Activated CD8-positive, alpha-beta memory T cell treated with anti-CD3 and anti-CD28 coated beads, Interleukin-2, amount 10 ng/mL, durations not matched to agents 7 days and 5 days (primary cell): ENCODE measurements at regions of chr16 and their contacts with region 1.

Region 1: DNA sequence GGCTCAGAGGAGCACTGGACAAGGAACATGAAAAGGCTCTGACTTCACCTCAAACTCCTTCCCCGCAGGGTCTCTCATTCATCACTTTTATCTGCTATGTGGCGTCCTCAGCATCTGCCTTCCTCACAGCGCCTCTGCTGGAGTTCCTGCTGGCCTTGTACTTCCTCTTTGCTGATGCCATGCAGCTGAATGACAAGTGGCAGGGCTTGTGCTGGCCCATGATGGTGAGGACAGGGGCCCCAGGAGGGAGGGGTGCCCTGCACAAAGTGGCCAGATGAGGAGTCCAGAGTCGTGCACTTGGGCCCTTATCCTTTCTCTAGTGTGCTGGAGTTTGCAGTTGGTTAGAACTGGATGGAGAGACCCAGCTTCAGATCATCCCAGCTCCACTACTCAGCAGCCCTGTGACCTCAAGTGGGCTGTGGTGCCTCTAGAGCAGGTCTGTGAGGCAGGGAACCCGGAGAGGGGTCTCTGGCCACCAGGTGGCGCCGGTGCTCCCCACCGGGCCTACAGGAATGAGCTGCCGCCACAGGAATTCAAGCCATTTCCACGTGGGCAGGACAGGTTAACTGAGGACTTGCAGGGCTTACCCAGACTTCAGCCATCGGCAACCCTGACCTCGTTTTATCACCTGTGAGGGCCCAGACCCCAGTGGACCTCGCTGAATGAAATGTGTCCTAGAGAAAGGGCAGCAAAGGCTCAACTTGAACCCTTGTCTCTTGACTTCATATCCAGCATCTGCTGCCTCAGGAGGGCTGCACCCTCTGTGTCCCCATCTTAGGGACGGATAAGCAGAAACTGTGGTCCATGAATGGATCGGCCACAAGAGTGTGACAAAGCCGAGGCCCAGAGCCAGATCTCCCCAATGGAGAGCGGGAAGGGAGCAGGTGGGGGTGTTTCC is 4.0 kb downstream of the CMTM3 start:
- DNase-seq: peak; percentile 86
- ATAC-seq: peak; percentile 17
- H3K4me3 Mint-ChIP-seq: no peak overlapping the region
- H3K27ac Mint-ChIP-seq: peak overlapping the region; percentile 59
- H3K4me1 Mint-ChIP-seq: peaks cover 46% of the 10 kb centered on the region
- H3K27me3 Mint-ChIP-seq: no peaks in the 10 kb centered on the region

Region 2: DNA sequence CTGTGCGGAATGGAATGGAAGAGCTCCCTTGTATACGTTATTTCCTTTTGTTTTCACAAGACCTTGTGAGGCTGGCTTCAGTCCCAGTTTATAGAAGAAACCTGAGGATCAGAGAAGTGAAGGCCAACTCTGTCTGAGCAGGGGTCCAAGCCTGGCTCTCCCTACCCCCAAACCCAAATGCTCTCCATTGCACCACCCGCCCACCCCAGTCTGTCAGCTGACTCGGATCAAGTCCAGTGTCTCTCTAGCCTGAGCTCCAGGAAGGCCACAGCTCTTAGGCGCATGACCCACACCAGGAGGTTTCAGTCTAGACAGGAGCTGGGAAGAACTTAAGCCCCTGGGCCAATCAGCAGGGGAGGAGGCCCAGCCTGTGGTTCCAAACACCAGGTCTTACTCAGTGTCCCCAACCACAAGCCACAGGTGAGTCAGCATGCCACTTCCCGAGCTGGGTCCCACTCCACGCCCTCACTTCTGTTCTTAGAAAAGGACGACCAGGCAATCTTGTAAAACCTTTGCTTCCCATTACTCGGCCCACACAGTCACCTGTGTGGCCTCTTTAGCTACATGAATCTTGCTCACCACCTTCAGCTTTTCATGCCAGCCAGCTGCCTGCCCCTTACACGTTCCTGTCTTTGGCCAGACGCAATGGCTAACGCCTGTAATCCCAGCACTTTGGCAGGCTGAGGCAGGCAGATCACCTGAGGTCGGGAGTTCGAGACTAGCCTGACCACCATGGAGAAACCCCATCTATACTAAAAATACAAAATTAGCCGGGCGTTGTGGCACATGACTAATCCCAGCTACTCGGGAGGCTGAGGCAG is 86.3 kb before region 1 on chr16:
- CTCF ChIA-PET with region 1: interaction called, 14 read pairs
- DNase-seq: peak; percentile 98
- ATAC-seq: peak; percentile 84
- H3K4me3 Mint-ChIP-seq: peak overlapping the region; percentile 62
- H3K27ac Mint-ChIP-seq: peak overlapping the region; percentile 92
- H3K4me1 Mint-ChIP-seq: peaks cover 94% of the 10 kb centered on the region
- H3K27me3 Mint-ChIP-seq: no peaks in the 10 kb centered on the region

Region 3: DNA sequence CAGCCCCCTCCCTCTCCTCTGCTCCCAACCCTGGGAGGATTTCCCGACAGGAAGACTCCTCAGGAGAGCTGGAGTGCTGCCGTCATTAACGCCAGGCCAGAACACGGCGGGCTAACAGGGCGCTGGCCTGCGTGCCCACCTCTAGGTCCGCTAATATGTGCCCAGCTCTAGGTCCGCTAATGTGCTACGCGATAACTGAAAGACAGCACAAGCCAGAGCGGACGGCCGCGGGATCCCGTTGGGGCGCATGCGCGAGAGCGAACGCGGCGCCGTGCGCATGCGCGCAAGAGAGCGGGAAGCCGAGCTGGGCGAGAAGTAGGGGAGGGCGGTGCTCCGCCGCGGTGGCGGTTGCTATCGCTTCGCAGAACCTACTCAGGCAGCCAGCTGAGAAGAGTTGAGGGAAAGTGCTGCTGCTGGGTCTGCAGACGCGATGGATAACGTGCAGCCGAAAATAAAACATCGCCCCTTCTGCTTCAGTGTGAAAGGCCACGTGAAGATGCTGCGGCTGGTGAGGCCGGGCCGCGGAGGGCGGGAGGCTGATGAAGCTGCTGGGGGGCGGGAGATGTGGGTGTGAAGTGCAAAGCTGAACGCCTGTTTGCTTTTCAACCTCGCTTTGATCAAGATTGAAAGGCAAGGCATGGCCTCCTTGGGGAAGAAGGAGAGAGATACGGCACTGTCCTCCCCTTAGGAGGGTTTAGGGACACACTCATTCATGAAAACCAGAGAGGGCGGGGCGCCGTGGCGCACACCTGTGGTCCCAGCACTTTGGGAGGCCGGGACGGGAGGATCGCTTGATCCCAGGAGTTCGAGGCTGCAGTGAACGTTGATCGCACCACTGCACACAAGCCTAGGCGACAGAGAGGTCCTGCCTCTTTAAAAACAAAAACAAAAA is 56.0 kb before region 1 on chr16 and contains the start of gene CKLF:
- CTCF ChIA-PET with region 1: interaction called, 10 read pairs
- DNase-seq: peak; percentile 94
- ATAC-seq: peak; percentile 74
- H3K4me3 Mint-ChIP-seq: peak within 1 kb of the TSS; percentile 98
- H3K27ac Mint-ChIP-seq: peak within 1 kb of the TSS; percentile 96
- H3K4me1 Mint-ChIP-seq: peaks cover 80% of the 10 kb centered on the region
- H3K27me3 Mint-ChIP-seq: no peaks in the 10 kb centered on the region
- total RNA-seq, gene CKLF: 199 to 220 TPM

Region 4: DNA sequence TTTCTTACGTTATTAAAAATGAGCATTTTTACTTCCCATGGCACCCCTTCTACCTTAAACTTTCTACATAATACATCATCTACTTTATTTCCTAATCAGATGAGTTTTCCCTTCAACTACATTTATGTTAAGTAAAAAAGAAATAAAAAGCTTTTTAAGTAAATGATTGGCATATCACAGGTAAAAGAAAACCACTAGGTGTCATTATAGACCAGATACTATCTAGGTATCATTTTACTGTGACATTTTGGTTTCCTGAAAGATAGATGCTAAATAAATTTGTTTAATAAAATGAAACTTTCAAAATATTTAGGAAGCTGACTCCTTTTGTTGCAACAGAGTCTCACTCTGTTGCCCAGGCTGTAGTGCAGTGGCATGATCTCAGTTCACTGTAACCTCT is 46.1 kb before region 1 on chr16:
- CTCF ChIA-PET with region 1: interaction called, 16 read pairs
- DNase-seq: no peak
- ATAC-seq: no peak
- H3K4me3 Mint-ChIP-seq: no peak overlapping the region
- H3K27ac Mint-ChIP-seq: peak overlapping the region; percentile 75
- H3K4me1 Mint-ChIP-seq: peaks cover 71% of the 10 kb centered on the region
- H3K27me3 Mint-ChIP-seq: no peaks in the 10 kb centered on the region

Region 5: DNA sequence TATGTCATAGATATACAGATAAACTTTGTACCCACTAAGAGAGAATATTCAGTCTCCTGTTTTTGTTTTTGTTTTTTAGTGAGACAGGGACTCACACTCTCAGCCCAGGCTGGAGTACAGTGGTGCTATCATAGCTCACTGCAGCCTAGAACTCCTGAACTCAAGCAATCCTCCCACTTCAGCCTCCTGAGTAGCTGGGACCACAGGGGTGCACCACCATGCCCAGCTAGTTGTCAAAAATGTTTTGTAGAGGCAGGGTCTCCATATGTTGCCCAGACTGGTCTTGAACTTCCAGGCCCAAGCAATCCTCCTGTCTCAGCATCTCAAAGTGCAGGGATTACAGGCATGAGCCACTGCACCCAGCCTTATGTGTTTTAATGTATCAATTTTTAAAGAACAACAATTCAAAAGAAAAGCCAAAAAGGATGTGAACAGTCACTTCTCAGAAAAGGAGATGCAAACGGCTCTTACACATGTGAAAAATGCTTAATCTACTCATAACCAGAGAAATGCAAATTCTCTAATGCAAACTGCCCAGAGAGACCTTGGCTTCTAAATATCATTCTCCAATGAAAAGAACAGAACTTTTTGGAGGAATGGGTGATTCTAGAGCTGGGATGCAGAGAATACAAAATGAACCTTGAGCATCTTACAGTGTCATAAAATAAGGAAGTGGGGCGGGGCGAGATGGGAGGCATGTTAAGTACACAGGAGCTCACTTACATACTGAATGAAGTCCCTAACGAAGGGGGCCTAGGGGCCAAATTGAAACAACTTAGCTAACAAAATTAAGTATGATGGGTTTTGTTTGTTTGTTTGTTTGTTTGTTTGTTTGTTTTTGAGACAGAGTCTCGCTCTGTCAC is 11.3 kb before region 1 on chr16:
- CTCF ChIA-PET with region 1: interaction called, 36 read pairs
- DNase-seq: peak; percentile 57
- ATAC-seq: peak; percentile 72
- H3K4me3 Mint-ChIP-seq: peak overlapping the region; percentile 47
- H3K27ac Mint-ChIP-seq: peak overlapping the region; percentile 96
- H3K4me1 Mint-ChIP-seq: peaks cover 48% of the 10 kb centered on the region
- H3K27me3 Mint-ChIP-seq: no peaks in the 10 kb centered on the region

Region 6: DNA sequence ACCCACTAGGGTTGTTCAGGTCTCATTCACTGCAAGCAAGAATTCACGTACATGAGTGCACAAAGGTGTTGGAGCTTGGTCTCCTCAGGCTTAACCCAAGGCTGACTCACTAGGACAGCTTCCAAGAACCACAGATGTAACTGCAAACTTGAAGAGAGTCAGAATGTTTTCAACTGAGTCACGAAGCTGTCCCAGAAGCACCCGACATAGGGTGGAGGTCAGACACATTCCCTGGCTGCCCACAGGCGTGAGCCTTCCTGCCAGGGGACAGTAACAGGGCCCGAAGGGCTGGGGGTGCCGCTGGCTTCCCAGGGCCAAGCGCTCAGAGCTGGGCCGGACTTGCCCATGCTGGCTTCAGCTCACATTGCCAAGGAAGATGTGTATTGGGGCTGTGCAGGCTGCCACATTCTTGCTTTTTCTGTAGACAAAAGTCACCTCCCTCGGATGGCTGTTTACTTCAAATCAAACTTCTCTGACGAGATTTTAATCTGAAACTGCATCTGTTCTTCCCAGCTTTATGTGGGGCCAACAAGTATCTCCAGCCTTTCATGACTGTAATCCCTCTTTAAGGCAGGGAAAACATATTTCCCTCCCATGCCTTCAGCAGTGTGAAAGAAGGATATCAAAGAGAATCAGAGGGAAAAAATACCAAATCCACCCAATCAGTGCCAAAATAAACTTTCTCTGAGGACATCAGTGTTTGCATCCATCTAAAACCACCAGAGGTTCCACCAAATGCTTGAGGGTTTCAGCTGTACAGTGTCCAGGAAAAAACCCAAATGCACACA is 10.3 kb after region 1 on chr16:
- CTCF ChIA-PET with region 1: interaction called, 11 read pairs
- DNase-seq: no peak
- ATAC-seq: no peak
- H3K4me3 Mint-ChIP-seq: no peak overlapping the region
- H3K27ac Mint-ChIP-seq: no peak overlapping the region
- H3K4me1 Mint-ChIP-seq: peaks cover 12% of the 10 kb centered on the region
- H3K27me3 Mint-ChIP-seq: no peaks in the 10 kb centered on the region

Region 7: DNA sequence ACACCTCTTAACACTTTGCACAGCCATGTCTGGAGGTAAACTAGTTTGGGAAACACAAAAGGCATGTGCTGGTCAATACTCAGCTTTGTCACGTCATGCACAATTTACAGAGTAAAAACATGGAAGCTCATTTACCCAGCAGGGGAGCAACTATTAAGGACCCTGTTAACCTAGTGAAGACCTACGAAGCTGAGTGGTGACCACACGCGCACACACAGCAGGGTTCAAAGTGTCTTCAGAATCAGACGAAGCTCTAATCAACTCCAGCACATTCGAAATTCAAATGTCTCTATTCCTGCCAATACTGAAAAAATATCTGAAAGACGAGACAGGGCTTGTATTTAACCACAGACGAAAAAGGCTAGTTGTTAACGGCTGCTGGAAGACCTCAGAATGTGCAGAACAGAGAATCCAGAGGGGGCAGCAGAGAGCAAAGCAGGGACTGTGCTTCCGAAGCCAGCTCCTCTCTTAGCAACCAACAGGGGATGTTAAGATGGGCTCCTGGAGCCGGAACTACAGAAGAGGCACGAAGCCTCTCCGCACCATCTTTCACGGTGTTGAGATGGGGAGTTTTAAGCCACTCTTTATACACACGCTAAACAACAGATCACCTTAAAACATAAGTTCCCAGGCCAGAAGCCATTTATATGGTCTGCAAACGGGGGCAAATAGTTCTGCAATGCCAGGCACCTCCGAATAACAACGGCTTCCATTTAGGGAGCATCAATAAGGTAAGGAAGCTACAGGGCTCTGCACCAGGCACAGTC is 42.4 kb after region 1 on chr16:
- CTCF ChIA-PET with region 1: interaction called, 22 read pairs
- DNase-seq: peak; percentile 91
- ATAC-seq: peak; percentile 100
- H3K4me3 Mint-ChIP-seq: peak overlapping the region; percentile 43
- H3K27ac Mint-ChIP-seq: peak overlapping the region; percentile 7
- H3K4me1 Mint-ChIP-seq: peaks cover 18% of the 10 kb centered on the region
- H3K27me3 Mint-ChIP-seq: no peaks in the 10 kb centered on the region

Region 8: GRCh38 chr16:66682271-66682670 is 73.8 kb after region 1 on chr16:
- CTCF ChIA-PET with region 1: no interaction called
- DNase-seq: no peak
- ATAC-seq: no peak
- H3K4me3 Mint-ChIP-seq: no peak overlapping the region
- H3K27ac Mint-ChIP-seq: no peak overlapping the region
- H3K4me1 Mint-ChIP-seq: no peaks in the 10 kb centered on the region
- H3K27me3 Mint-ChIP-seq: no peaks in the 10 kb centered on the region

Region 9: GRCh38 chr16:66798161-66798560 is 189.7 kb after region 1 on chr16:
- CTCF ChIA-PET with region 1: no interaction called
- DNase-seq: no peak
- ATAC-seq: no peak
- H3K4me3 Mint-ChIP-seq: no peak overlapping the region
- H3K27ac Mint-ChIP-seq: no peak overlapping the region
- H3K4me1 Mint-ChIP-seq: no peaks in the 10 kb centered on the region
- H3K27me3 Mint-ChIP-seq: no peaks in the 10 kb centered on the region